ENCODE measurements at regions of chr3 and their contacts with region 1.

Region 1: DNA sequence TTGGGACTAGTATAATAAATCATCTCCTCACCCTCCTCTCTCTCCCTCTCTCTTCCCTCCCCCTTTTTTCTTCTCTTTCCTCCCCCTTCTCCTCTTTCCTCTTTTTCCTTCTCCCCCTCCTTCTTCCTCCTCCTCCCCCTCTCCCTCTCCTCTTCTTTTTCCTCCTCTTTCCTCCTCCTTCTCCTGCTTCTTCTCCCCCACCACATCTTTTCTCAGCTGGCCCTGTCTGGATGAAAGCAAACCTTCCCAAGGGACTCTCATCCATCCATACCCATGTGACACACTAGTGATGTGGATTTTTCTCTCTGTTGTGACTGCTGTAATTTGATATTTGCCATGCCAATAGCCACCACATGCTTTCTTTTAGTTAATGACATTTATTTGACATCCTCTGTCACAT is 127.2 kb downstream of the EBLN2 start:
- DNase-seq: no peak

Region 2: GRCh38 chr3:73228959-73229358 is 40.3 kb after region 1 on chr3:
- intact Hi-C with region 1: loop called in 1 of 2 experiments (anchors 1 kb)
- DNase-seq: no peak

Measured in posterior vena cava (tissue), 2 donors.